ENCODE measurements at regions of chr2 and their contacts with region 1.

Region 1: GRCh38 chr2:219475697-219476651 is 22.7 kb upstream of the GMPPA start:
- DNase-seq: peak; percentile 78
- H3K4me3 ChIP-seq: no peak overlapping the region
- H3K27ac ChIP-seq: peak overlapping the region in 3 of 4 donors; percentile 36 to 68 (median 36)
- H3K4me1 ChIP-seq: peaks cover 0 to 8% (median 4%) of the 10 kb centered on the region in 4 donors
- H3K27me3 ChIP-seq: peaks cover 4% of the 10 kb centered on the region
- CTCF ChIP-seq: peak; percentile 83 to 91 (median 89)
- EP300 ChIP-seq: no peak
- POLR2A ChIP-seq: no peak

Region 2: GRCh38 chr2:219521066-219521880 is 45.3 kb after region 1 on chr2:
- in situ Hi-C with region 1: loop called in 3 of 4 experiments (anchors 10 kb)
- intact Hi-C with region 1: no loop called
- DNase-seq: peak; percentile 21
- H3K4me3 ChIP-seq: no peak overlapping the region
- H3K27ac ChIP-seq: peak overlapping the region in 3 of 4 donors; percentile 70 to 81 (median 73)
- H3K4me1 ChIP-seq: peaks cover 8 to 18% (median 11%) of the 10 kb centered on the region in 4 donors
- H3K27me3 ChIP-seq: peaks cover 78% of the 10 kb centered on the region
- CTCF ChIP-seq: peak; percentile 37 to 57 (median 48)
- EP300 ChIP-seq: no peak
- POLR2A ChIP-seq: no peak

Region 3: DNA sequence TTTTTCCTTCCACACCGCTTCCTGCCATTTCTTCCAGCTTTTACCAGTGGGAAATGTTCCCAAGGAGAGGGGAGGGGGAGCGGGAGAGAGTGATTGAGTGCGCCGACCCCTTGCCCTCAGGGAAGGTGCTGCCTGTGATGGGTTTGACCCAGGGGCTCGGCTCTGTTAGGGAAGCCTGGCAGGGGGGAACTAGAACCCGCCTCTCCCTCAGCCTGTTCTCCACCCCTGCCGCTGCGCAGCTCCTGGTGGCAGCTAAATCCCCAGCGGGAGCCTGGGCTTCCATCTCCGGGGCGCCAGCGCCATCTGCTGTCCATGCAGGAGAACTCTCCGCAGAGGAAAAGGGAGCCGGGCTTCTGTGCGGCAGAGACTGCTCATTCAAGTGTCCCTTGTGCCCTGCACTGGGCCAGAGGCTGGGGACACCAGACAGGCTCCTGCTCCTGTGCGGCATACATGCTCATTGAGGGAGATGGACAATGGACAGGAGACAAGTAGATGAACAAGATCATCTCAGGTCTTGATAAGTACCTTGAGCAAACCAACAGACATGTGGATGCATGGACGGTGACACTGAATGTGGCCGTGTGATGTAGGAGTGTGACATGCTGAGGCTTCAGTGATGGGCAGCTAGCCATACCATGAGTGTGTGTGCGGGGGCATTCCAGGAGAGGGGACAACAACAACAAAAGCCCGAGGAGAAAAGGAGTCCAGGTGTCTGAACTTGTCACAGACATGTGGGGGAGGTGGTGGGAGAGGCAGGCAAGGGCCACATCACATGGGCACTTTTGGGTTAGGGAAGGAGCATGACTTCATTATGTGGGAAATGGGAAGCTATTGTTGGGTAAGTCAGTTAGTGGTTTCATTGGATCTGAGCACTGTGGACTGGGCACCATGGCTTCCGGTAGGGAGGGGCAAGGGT is 54.3 kb after region 1 on chr2:
- in situ Hi-C with region 1: loop called in 3 of 4 experiments (anchors 10 kb)
- intact Hi-C with region 1: loop called (anchors 5 kb)
- DNase-seq: peak; percentile 84
- H3K4me3 ChIP-seq: no peak overlapping the region
- H3K27ac ChIP-seq: no peak overlapping the region
- H3K4me1 ChIP-seq: peaks cover 0 to 5% (median 0%) of the 10 kb centered on the region in 4 donors
- H3K27me3 ChIP-seq: peaks cover 63% of the 10 kb centered on the region
- CTCF ChIP-seq: peak; percentile 95 to 98 (median 97)
- EP300 ChIP-seq: no peak
- POLR2A ChIP-seq: no peak

Region 4: DNA sequence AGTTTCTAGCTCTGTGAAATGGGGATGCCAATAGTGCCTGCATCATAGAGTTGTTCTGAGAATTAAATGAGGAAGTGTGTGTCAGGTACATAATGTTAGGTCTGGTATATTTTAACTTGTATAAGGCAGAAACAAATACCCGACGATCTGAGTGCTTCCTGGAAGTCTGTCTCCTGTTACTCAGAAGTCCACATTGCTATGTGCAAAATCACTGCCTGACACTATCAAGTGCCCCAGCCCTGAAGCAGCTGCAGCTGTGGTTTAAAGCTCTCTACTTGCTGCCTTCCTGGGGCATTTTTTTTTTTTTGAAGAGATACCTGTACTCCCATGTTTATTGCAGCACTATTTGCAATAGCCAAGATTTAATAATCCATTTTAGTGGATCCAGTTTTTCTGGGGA is 276.8 kb after region 1 on chr2:
- in situ Hi-C with region 1: no loop called
- intact Hi-C with region 1: no loop called
- DNase-seq: no peak
- H3K4me3 ChIP-seq: no peak overlapping the region
- H3K27ac ChIP-seq: no peak overlapping the region
- H3K4me1 ChIP-seq: no peaks in the 10 kb centered on the region
- H3K27me3 ChIP-seq: no peaks in the 10 kb centered on the region
- CTCF ChIP-seq: no peak
- EP300 ChIP-seq: no peak
- POLR2A ChIP-seq: no peak